GM12878 (cell line): ENCODE measurements at regions of chr2 and their contacts with region 1.

Region 1: GRCh38 chr2:86298411-86299379 is 38.7 kb downstream of the REEP1 start:
- DNase-seq: no peak
- ATAC-seq: no peak; the same call in 2 of the 3 replicates
- H3K4me3 ChIP-seq: no peak overlapping the region
- H3K27ac ChIP-seq: no peak overlapping the region
- H3K4me1 ChIP-seq: no peaks in the 10 kb centered on the region
- H3K27me3 ChIP-seq: no peaks in the 10 kb centered on the region
- CTCF ChIP-seq: 0 out of 6 replicates have a peak, but pooled peaks of 1 of the 3 experiments have one; percentile 10
- EP300 ChIP-seq: no peak
- POLR2A ChIP-seq: no peak
- RAD21 ChIP-seq: no peak

Region 2: GRCh38 chr2:86283411-86284030 is 15.2 kb before region 1 on chr2:
- CTCF ChIA-PET with region 1: interaction called, 10 read pairs
- POLR2A ChIA-PET with region 1: no interaction called
- RAD21 ChIA-PET with region 1: interaction called, 5 read pairs
- SMC1A ChIA-PET with region 1: interaction called, 6 read pairs
- in situ Hi-C with region 1: no loop called
- intact Hi-C with region 1: no loop called
- DNase-seq: no peak
- ATAC-seq: no peak
- H3K4me3 ChIP-seq: no peak overlapping the region
- H3K27ac ChIP-seq: no peak overlapping the region
- H3K4me1 ChIP-seq: no peaks in the 10 kb centered on the region
- H3K27me3 ChIP-seq: no peaks in the 10 kb centered on the region
- CTCF ChIP-seq: no peak
- EP300 ChIP-seq: no peak
- POLR2A ChIP-seq: no peak
- RAD21 ChIP-seq: no peak

Region 3: DNA sequence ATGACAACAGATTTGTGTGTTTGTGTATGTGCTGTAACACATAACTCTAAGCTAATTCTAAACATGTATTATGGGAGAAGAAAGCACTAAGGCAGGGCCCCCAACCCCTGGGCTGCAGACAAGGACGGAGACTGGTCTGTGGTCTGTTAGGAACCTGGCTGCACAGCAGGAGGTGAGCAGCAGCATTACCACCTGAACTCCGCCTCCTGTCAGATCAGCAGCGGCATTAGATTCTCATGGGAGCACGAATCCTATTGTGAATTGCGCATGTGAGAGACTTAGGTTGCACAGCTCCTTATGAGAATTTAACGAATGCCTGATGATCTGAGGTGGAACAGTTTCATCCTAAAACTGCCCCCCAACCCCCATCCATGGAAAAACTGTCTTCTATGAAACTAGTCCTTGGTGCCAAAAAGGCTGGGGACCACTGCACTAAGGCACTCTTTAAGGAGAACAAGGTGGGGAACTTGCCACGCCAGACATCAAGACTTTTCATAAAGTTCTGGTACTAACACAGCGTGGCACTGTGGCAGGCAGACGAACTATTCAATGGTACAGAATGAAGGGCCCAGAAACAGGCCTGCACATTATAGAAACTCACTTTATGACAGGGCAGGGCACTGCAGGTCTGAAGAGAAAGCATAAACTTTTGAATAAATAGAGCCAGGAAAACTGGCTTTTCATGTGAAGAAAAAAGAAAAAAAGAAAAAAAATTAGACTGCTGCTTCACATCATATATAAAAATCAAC is 24.8 kb after region 1 on chr2:
- CTCF ChIA-PET with region 1: no interaction called
- POLR2A ChIA-PET with region 1: no interaction called
- RAD21 ChIA-PET with region 1: no interaction called
- SMC1A ChIA-PET with region 1: no interaction called
- in situ Hi-C with region 1: no loop called
- intact Hi-C with region 1: no loop called
- DNase-seq: no peak
- ATAC-seq: no peak
- H3K4me3 ChIP-seq: no peak overlapping the region
- H3K27ac ChIP-seq: no peak overlapping the region
- H3K4me1 ChIP-seq: no peaks in the 10 kb centered on the region
- H3K27me3 ChIP-seq: no peaks in the 10 kb centered on the region
- CTCF ChIP-seq: no peak
- EP300 ChIP-seq: no peak
- POLR2A ChIP-seq: no peak
- RAD21 ChIP-seq: no peak

Region 4: GRCh38 chr2:86368161-86368824 is 69.6 kb after region 1 on chr2:
- CTCF ChIA-PET with region 1: interaction called, 6 read pairs
- POLR2A ChIA-PET with region 1: no interaction called
- RAD21 ChIA-PET with region 1: interaction called, 5 read pairs
- SMC1A ChIA-PET with region 1: interaction called, 9 read pairs
- in situ Hi-C with region 1: no loop called
- intact Hi-C with region 1: loop called (anchors 5 kb)
- DNase-seq: no peak
- ATAC-seq: peak; percentile 79
- H3K4me3 ChIP-seq: no peak overlapping the region
- H3K27ac ChIP-seq: no peak overlapping the region
- H3K4me1 ChIP-seq: no peaks in the 10 kb centered on the region
- H3K27me3 ChIP-seq: no peaks in the 10 kb centered on the region
- CTCF ChIP-seq: peak; percentile 63 to 67 (median 66)
- EP300 ChIP-seq: no peak
- POLR2A ChIP-seq: no peak
- RAD21 ChIP-seq: peak; percentile 85